Gastrocnemius medialis (tissue), 4 donors: ENCODE measurements at regions of chr1 and their contacts with region 1.

Region 1: GRCh38 chr1:17125756-17126237 is 6.5 kb upstream of the PADI2 start:
- DNase-seq: peak; percentile 66 to 73
- ATAC-seq: peak; percentile 19 to 35
- H3K4me3 ChIP-seq: no peak overlapping the region
- H3K27ac ChIP-seq: no peak overlapping the region
- H3K4me1 ChIP-seq: peaks cover 13 to 20% of the 10 kb centered on the region in 2 donors
- H3K27me3 ChIP-seq: no peaks in the 10 kb centered on the region
- CTCF ChIP-seq: peak; percentile 81 to 98 (median 94)
- POLR2A ChIP-seq: no peak

Region 2: DNA sequence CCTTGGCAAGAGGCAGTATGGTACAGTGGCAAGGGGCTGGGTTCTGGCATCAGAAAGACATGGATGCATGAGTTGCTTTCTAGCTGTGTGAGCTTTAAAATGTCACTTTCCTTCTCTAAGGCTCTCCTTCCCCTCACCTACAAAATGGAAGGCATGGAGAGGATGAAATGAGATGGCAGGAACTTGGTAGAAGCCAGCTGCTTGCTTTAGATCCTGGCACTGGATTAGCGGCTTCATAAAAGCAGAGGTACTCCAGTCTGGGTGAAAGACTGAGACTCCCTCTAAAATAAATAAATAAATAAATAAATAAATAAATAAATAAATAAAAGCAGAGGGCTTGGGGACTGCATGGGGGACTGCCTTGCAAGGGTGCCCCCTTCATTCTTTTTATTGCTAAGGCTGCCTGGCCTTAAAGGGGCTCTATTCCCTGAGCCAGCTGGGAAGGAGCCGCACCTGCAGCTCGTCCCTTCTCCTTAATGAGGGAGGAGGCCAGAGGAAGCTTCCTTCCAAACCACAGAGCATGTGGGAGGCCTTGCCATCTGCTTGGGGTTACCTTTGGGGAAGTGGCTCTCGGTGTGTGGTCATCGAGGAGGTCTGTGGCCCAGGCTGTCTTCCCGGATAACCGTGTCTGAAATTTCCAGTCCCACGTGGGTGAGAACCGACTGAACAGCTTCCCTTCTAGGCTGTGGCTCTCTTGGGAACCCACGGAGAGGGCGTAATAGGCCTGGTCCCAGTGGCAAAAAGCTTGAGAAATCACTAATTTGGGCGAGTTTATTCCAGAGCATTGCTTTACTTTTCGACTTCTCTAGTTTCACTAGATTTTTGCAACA is 112.1 kb before region 1 on chr1:
- in situ Hi-C with region 1: no loop called
- intact Hi-C with region 1: no loop called
- DNase-seq: no peak
- ATAC-seq: no peak
- H3K4me3 ChIP-seq: no peak overlapping the region
- H3K27ac ChIP-seq: no peak overlapping the region
- H3K4me1 ChIP-seq: peaks cover 11 to 25% of the 10 kb centered on the region in 2 donors
- H3K27me3 ChIP-seq: no peaks in the 10 kb centered on the region
- CTCF ChIP-seq: no peak
- POLR2A ChIP-seq: no peak

Region 3: GRCh38 chr1:17236779-17237560 is 111.2 kb after region 1 on chr1:
- in situ Hi-C with region 1: loop called (anchors 5 kb)
- intact Hi-C with region 1: loop called (anchors 1 kb)
- DNase-seq: peak; percentile 60 to 72
- ATAC-seq: peak; percentile 71 to 89
- H3K4me3 ChIP-seq: no peak overlapping the region
- H3K27ac ChIP-seq: no peak overlapping the region
- H3K4me1 ChIP-seq: peaks cover 0 to 9% of the 10 kb centered on the region in 2 donors
- H3K27me3 ChIP-seq: peaks cover 0 to 2% (median 0%) of the 10 kb centered on the region in 3 donors
- CTCF ChIP-seq: peak; percentile 76 to 96 (median 91)
- POLR2A ChIP-seq: no peak

Region 4: DNA sequence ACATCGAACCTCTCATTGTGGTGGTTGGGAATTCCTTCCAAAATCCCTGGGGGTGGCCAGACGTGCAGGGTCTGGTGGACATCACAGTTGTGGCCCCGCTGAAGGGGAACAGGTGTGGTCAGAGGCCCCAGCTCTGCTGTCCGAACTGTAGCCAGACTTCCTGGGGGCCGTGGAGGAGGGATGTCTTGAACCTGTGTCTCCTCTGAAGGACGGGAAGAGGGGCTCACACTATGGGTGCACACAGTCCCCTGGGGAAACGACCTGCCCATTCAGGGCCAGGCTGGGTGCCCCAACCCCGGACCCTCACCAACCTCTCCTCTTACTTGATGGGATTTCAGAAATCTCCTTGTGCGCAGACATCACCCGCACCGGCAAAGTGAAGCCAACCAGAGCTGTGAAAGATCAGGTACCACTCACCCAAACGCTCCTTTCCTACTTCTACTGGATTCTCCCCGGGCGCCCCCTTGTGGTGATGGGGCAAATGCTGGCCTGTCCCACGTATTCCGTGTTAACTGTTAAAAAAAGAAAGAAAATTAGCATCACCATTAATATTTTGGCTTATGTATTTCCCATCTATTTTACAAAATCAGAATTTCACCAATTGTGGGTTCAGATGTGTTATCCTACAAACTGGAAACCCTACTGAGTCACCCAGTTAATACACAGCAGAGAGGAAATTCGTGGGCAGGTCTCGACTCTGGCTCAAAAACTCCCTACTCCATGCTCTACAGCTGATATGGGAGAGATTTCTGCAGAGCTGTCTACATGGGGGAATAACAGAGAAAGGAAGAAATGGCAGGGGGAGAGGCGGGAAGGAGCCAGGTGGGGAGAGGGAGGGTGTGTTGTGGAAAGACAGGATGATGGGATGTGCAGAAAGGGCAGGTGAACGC is 210.3 kb after region 1 on chr1:
- in situ Hi-C with region 1: loop called in 3 of 4 experiments (anchors 10 kb)
- intact Hi-C with region 1: loop called (anchors 2 kb)
- DNase-seq: no peak
- ATAC-seq: no peak
- H3K4me3 ChIP-seq: no peak overlapping the region
- H3K27ac ChIP-seq: no peak overlapping the region
- H3K4me1 ChIP-seq: no peaks in the 10 kb centered on the region
- H3K27me3 ChIP-seq: peaks cover 0 to 9% (median 4%) of the 10 kb centered on the region in 3 donors
- CTCF ChIP-seq: peak; percentile 32 to 76 (median 57)
- POLR2A ChIP-seq: no peak